MCF 10A (cell line): ENCODE measurements at regions of chr1 and their contacts with region 1.

Region 1: GRCh38 chr1:153990468-153991150 is at the start of gene RPS27:
- DNase-seq: peak; percentile 100
- H3K4me3 Mint-ChIP-seq: peak within 1 kb of the TSS; percentile 90
- H3K27ac Mint-ChIP-seq: peak within 1 kb of the TSS; percentile 98
- H3K4me1 Mint-ChIP-seq: peaks cover 33% of the 10 kb centered on the region
- H3K27me3 Mint-ChIP-seq: no peaks in the 10 kb centered on the region
- CTCF ChIP-seq: no peak
- total RNA-seq, gene RPS27: 3,026 and 3,064 TPM in 2 replicates

Region 2: GRCh38 chr1:153494976-153495535 is 495.6 kb before region 1 on chr1:
- CTCF ChIA-PET with region 1: no interaction called
- POLR2A ChIA-PET with region 1: no interaction called
- intact Hi-C with region 1: no loop called
- DNase-seq: peak; percentile 81
- H3K4me3 Mint-ChIP-seq: no peak overlapping the region
- H3K27ac Mint-ChIP-seq: no peak overlapping the region
- H3K4me1 Mint-ChIP-seq: peaks cover 27% of the 10 kb centered on the region
- H3K27me3 Mint-ChIP-seq: peaks cover 39% of the 10 kb centered on the region
- CTCF ChIP-seq: peak; percentile 99

Region 3: DNA sequence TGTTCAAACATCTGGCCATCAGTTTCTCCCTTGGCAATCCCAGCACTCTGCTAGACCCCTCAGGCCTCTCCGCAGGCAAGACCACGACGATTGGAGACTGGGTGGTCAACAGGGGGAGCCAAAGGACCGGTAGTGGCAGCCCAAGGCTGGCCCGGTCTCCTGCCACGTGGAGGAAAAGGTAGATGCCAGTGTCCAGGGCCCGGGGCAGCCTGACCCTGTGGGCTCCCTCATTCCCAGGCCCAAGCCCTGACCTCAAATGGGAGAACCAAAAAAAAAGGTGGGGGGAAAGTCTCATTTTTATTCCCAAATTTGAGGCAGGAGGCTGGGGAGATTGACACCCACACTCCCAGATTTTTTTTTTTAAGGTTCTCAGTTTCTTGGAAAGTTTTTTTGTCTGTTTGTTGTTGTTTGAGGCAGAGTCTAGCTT is 479.6 kb before region 1 on chr1:
- CTCF ChIA-PET with region 1: no interaction called
- POLR2A ChIA-PET with region 1: interaction called, 6 read pairs
- intact Hi-C with region 1: loop called (anchors 1 kb)
- DNase-seq: peak; percentile 87
- H3K4me3 Mint-ChIP-seq: no peak overlapping the region
- H3K27ac Mint-ChIP-seq: peak overlapping the region; percentile 73
- H3K4me1 Mint-ChIP-seq: peaks cover 60% of the 10 kb centered on the region
- H3K27me3 Mint-ChIP-seq: no peaks in the 10 kb centered on the region
- CTCF ChIP-seq: peak; percentile 100

Region 4: DNA sequence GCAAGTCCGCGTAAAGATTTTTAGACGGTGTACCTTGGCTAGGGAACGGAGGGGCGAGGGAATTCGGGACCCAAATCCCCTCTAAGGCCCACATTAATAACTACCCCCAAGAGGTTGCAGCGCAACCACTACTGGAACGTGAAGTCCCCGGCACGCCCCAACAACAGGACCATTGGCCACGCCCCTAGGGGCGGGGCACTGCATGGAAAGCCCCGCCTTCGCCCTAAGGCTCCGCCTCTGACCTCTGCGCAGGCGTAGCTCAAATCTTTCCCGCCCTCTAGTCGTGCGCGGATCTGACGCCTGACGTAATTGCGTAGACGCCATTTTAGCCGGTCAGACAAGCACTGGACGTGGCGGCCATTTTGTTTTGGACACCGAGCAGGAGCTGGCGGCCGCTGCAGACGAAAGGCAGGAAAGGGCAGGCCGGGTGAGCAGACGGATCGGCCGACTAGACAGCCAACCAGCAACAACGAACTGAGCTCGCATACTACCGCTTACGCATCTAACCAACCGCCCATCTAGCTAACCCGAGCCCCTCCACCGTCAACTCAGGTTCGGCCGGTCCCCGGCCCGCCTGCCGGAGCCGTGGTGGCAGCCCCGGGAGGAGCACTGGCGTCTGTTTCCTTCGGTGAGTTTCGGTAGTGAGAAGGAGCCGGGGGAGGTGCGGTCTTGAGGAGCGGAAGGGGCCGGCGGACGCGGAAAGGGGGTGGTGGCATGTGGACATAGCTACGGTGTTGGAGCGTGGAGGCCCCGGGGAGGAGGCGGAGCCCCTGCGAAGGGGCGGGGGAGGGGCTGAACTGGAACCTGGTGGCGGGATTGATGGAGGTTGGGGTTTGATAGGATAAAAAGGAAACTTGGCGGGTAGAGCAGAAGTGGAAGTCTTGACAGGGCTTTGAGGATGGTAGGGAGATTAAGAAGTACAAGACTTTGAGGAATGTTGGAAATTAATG is 356.6 kb before region 1 on chr1 and contains the start of gene CHTOP:
- CTCF ChIA-PET with region 1: no interaction called
- POLR2A ChIA-PET with region 1: interaction called, 14 read pairs
- intact Hi-C with region 1: no loop called
- DNase-seq: peak; percentile 99
- H3K4me3 Mint-ChIP-seq: peak within 1 kb of the TSS; percentile 97
- H3K27ac Mint-ChIP-seq: peak within 1 kb of the TSS; percentile 100
- H3K4me1 Mint-ChIP-seq: peaks cover 32% of the 10 kb centered on the region
- H3K27me3 Mint-ChIP-seq: no peaks in the 10 kb centered on the region
- CTCF ChIP-seq: no peak
- total RNA-seq, gene CHTOP: 147 and 156 TPM in 2 replicates

Region 5: GRCh38 chr1:153749408-153750005 is 241.1 kb before region 1 on chr1:
- CTCF ChIA-PET with region 1: interaction called, 5 read pairs
- POLR2A ChIA-PET with region 1: interaction called, 5 read pairs
- intact Hi-C with region 1: loop called (anchors 1 kb)
- DNase-seq: peak; percentile 89
- H3K4me3 Mint-ChIP-seq: no peak overlapping the region
- H3K27ac Mint-ChIP-seq: no peak overlapping the region
- H3K4me1 Mint-ChIP-seq: peaks cover 5% of the 10 kb centered on the region
- H3K27me3 Mint-ChIP-seq: no peaks in the 10 kb centered on the region
- CTCF ChIP-seq: peak; percentile 98

Region 6: DNA sequence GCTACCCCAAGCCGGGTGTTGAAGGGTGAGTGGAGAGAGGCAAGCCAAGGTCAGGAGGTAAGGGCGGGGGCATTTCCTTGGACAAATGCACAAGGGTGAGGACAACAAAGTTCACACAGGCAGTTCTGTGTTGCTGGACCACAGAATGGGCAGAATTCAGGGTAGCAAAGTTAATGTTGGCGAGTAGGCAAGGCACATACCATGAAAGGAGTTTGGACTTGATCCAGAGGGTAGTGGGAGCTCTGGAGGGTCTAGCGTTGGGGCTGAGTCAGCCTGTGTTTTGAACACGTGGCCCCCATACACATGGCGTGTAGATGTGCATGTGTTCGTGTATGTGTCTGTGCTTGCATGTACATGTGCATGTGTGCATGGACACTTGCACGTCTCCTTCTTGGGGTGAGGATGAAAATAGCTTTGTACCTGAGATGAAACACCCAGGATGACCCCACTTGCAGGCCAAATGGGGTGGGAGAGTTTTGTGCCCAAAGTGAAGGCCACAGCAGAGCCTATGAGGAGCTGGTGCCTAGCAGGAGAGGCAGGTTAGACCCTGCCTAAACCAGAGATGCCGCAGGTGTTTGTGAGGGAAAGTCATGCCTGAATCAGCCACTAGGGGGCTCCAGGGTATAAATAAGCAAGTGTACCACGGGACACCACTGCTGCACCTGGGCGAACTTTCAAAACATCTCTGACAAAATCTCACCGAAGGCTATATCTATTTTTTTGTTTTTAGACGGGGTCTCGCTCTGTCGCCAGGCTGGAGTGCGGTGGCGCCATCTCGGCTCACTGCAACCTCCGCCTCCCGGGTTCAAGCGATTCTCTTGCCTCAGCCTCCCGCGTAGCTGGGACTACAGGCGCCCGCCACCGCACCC is 193.6 kb before region 1 on chr1:
- CTCF ChIA-PET with region 1: interaction called, 80 read pairs
- POLR2A ChIA-PET with region 1: interaction called, 14 read pairs
- intact Hi-C with region 1: loop called (anchors 1 kb)
- DNase-seq: peak; percentile 88
- H3K4me3 Mint-ChIP-seq: no peak overlapping the region
- H3K27ac Mint-ChIP-seq: no peak overlapping the region
- H3K4me1 Mint-ChIP-seq: peaks cover 15% of the 10 kb centered on the region
- H3K27me3 Mint-ChIP-seq: no peaks in the 10 kb centered on the region
- CTCF ChIP-seq: peak; percentile 93

Region 7: DNA sequence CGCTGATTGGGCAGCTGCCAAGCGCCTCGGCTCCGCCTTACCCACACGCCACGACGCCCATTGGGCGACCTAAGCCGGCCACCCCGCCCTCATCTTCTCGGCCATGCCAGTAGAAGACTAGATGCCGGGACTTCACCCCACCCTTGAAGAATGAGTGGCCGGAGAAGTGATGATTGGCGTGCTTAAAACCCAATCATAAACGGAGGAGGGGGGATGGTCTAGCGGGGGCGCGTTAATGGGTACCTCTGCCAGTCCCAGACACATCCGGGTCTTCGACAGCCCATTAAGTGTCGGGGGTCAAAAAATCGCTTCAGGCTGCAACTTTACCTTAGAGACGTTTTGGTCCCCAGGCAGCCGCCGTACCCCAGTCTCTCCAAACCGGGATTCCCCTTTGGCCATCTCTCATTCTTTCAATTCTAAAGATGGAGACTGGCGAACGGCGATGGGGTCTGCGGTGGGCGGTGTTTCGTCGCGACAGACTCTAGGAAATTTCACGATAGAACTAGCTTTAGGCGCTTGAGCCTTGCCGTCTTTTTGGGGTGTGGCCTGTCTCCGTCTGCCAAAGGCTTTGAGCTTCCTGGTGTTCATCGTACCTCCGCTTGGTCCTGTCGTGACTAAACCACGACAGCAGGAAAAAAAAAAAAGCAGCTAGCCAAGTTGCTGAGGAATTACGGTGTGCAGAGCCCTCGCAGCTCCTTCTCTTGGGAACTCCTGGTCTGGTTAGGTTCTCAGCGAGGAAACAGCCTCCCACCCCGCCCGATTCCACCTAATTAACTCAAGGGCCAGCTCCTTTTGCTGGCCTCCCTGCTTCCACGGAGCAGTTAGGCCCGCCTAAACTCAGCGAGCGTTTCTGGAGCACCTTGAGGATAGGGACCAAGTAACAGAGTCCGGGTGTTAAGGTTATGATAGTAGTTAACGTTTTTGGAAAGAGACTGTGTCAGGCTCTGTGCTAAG is 67.4 kb before region 1 on chr1 and contains the start of gene GATAD2B:
- CTCF ChIA-PET with region 1: interaction called, 41 read pairs
- POLR2A ChIA-PET with region 1: interaction called, 37 read pairs
- intact Hi-C with region 1: loop called (anchors 2 kb)
- DNase-seq: peak; percentile 100
- H3K4me3 Mint-ChIP-seq: peak within 1 kb of the TSS; percentile 74
- H3K27ac Mint-ChIP-seq: peak within 1 kb of the TSS; percentile 74
- H3K4me1 Mint-ChIP-seq: peaks cover 34% of the 10 kb centered on the region
- H3K27me3 Mint-ChIP-seq: no peaks in the 10 kb centered on the region
- CTCF ChIP-seq: no peak
- total RNA-seq, gene GATAD2B: 95.5 and 108 TPM in 2 replicates

Region 8: GRCh38 chr1:153977250-153978240 is 13.1 kb before region 1 on chr1 and contains the start of gene JTB:
- CTCF ChIA-PET with region 1: interaction called, 64 read pairs
- POLR2A ChIA-PET with region 1: interaction called, 246 read pairs
- intact Hi-C with region 1: no loop called
- DNase-seq: peak; percentile 93
- H3K4me3 Mint-ChIP-seq: peak within 1 kb of the TSS; percentile 98
- H3K27ac Mint-ChIP-seq: peak within 1 kb of the TSS; percentile 96
- H3K4me1 Mint-ChIP-seq: peaks cover 23% of the 10 kb centered on the region
- H3K27me3 Mint-ChIP-seq: no peaks in the 10 kb centered on the region
- CTCF ChIP-seq: no peak
- total RNA-seq, gene JTB: 194 and 224 TPM in 2 replicates

Region 9: GRCh38 chr1:154206196-154206595 is 215.6 kb after region 1 on chr1 and contains the start of gene CFAP141:
- CTCF ChIA-PET with region 1: no interaction called
- POLR2A ChIA-PET with region 1: no interaction called
- intact Hi-C with region 1: no loop called
- DNase-seq: no peak
- H3K4me3 Mint-ChIP-seq: no peak within 1 kb of the TSS
- H3K27ac Mint-ChIP-seq: peak within 1 kb of the TSS; percentile 8
- H3K4me1 Mint-ChIP-seq: no peaks in the 10 kb centered on the region
- H3K27me3 Mint-ChIP-seq: no peaks in the 10 kb centered on the region
- CTCF ChIP-seq: no peak
- total RNA-seq, gene CFAP141: not detected in 2 replicates

Region 10: DNA sequence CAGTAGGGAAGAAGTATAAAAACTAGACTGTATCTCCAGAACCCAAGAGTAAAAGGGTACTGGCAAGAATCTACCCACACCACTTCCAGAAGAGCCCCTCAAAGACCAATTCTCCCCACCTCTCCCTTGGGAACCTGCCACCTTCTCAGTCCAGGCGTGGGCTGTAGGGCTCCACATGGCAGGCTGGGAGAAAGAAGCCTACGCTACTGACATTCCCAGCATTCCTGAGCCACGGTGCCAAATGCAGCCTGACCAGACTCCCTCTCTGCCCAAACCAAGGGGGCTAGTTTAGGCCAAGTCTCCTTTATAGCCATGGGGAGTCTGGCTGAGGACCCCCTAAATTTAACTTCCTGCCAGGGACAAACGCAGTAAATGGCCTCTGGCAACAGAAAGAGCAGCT is 565.8 kb after region 1 on chr1:
- CTCF ChIA-PET with region 1: no interaction called
- POLR2A ChIA-PET with region 1: no interaction called
- intact Hi-C with region 1: no loop called
- DNase-seq: no peak
- H3K4me3 Mint-ChIP-seq: peak overlapping the region; percentile 76
- H3K27ac Mint-ChIP-seq: peak overlapping the region; percentile 65
- H3K4me1 Mint-ChIP-seq: peaks cover 23% of the 10 kb centered on the region
- H3K27me3 Mint-ChIP-seq: no peaks in the 10 kb centered on the region
- CTCF ChIP-seq: no peak